Naive thymus-derived CD4-positive, alpha-beta T cell (primary cell): ENCODE measurements at regions of chrX and their contacts with region 1.

Region 1: GRCh38 chrX:153763989-153764755 is at the start of gene PLXNB3:
- DNase-seq: peak; percentile 48 to 84 (median 68)
- ATAC-seq: peak; percentile 92
- H3K4me3 ChIP-seq: no peak within 1 kb of the TSS
- H3K4me3 Mint-ChIP-seq: no peak within 1 kb of the TSS
- H3K27ac ChIP-seq: no peak within 1 kb of the TSS
- H3K27ac Mint-ChIP-seq: peak within 1 kb of the TSS in 1 of 9 donors; percentile 70
- H3K4me1 ChIP-seq: no peaks in the 10 kb centered on the region
- H3K4me1 Mint-ChIP-seq: peaks cover 0 to 10% (median 5%) of the 10 kb centered on the region in 7 donors
- H3K27me3 ChIP-seq: no peaks in the 10 kb centered on the region
- H3K27me3 Mint-ChIP-seq: peaks cover 0 to 2% (median 0%) of the 10 kb centered on the region in 5 donors
- total RNA-seq, gene PLXNB3: 0.45 to 1.6 (median 0.68) TPM in 3 of 5 experiments, not detected in the others

Region 2: DNA sequence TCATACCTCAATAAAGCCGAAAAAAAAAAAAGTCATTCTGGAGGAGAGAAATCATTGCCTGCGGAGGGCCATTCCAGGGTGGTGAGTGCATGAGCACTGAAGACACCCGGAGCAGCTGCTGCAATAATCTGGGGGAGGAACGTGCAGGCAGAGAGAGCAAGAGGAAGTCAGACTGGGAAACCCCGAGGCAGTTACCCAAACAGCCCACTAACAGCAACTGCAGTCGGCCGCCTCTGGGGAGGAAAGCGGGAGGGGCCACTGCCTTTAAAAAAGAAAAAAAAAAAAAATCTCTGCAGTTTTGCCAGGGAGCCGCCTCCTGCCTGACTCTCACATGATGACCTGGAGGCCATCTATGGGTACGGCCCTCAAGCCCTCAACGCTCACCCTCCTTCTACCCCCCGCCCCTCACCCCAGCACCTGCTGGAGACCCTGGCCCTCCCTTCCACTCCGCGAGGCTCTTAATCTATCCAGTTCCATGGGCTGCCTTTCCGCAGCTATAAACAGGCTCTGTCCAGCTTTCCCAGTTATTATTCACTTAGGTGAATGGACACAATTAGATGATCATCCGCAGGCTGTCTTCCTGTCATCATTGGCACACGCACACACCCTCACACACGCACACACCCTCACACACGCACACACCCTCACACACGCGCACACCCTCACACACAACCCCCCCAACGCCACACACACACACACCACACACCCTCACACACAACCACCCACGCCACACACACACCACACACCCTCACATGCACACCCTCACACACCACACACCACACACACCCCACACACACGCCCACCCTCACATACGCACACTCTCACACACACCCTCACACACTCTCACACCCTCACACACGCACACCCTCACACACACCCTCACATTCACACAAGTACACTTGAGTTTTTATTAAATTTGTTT is 136.9 kb after region 1 on chrX:
- CTCF ChIA-PET with region 1: no interaction called
- POLR2A ChIA-PET with region 1: no interaction called
- intact Hi-C with region 1: loop called in 1 of 2 experiments (anchors 5 kb)
- DNase-seq: peak in 8 of 9 donors; percentile 45 to 76 (median 64)
- ATAC-seq: peak; percentile 91
- H3K4me3 ChIP-seq: no peak overlapping the region
- H3K4me3 Mint-ChIP-seq: peak overlapping the region; percentile 51 to 84 (median 64)
- H3K27ac ChIP-seq: no peak overlapping the region
- H3K27ac Mint-ChIP-seq: peak overlapping the region in 8 of 9 donors; percentile 33 to 88 (median 71)
- H3K4me1 ChIP-seq: peaks cover 25 to 35% of the 10 kb centered on the region in 2 donors
- H3K4me1 Mint-ChIP-seq: peaks cover 16 to 54% (median 43%) of the 10 kb centered on the region in 7 donors
- H3K27me3 ChIP-seq: no peaks in the 10 kb centered on the region
- H3K27me3 Mint-ChIP-seq: peaks cover 0 to 5% (median 0%) of the 10 kb centered on the region in 5 donors

Region 3: DNA sequence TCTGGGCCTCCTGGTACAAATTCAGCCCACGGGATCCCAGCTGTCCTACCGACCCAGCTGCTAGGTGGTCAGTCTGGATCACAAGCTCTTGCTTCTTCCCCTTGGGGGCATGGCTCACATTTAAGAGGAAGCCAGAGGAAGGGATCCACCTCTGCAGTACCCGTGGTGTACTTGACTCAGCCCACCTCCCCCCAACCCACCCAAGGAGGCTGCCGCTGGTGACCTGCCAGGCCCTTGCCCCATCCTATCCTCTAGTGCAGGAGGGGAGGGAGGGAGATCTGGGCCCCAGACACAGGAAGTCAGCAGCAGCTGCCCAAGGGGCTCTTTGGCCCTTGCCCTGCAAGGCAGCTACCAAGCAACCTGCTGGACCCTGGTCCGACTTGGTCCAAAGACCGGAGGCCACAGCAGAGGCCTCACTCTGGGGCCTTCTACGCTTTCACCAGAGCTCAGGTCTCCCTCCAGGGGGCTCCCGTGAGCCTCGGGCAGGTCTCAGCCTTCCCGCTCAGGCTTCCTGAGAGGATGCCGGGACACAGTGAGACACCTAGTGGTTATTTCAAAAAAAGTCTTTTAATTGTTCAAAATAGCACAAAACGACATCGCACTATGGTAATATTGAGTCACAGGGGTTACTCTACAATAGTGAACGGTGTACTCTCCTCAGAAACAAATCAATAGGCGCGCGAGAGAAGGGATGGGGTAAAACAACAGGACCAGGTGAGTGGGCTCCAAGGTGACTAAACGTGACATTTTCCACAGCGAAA is 183.0 kb after region 1 on chrX:
- CTCF ChIA-PET with region 1: interaction called, 8 read pairs
- POLR2A ChIA-PET with region 1: interaction called, 5 read pairs
- intact Hi-C with region 1: loop called (anchors 1 kb)
- DNase-seq: peak; percentile 58 to 83 (median 78)
- ATAC-seq: peak; percentile 93
- H3K4me3 ChIP-seq: no peak overlapping the region
- H3K4me3 Mint-ChIP-seq: peak overlapping the region; percentile 0 to 69 (median 32)
- H3K27ac ChIP-seq: no peak overlapping the region
- H3K27ac Mint-ChIP-seq: peak overlapping the region; percentile 26 to 94 (median 87)
- H3K4me1 ChIP-seq: peaks cover 3 to 9% of the 10 kb centered on the region in 2 donors
- H3K4me1 Mint-ChIP-seq: peaks cover 6 to 30% (median 20%) of the 10 kb centered on the region in 7 donors
- H3K27me3 ChIP-seq: no peaks in the 10 kb centered on the region
- H3K27me3 Mint-ChIP-seq: no peaks in the 10 kb centered on the region

Region 4: GRCh38 chrX:153953342-153953830 is 189.2 kb after region 1 on chrX:
- CTCF ChIA-PET with region 1: interaction called, 8 read pairs
- POLR2A ChIA-PET with region 1: interaction called, 5 read pairs
- intact Hi-C with region 1: loop called (anchors 1 kb)
- DNase-seq: peak; percentile 61 to 87 (median 78)
- ATAC-seq: peak; percentile 89
- H3K4me3 ChIP-seq: no peak overlapping the region
- H3K4me3 Mint-ChIP-seq: no peak overlapping the region
- H3K27ac ChIP-seq: no peak overlapping the region
- H3K27ac Mint-ChIP-seq: peak overlapping the region in 6 of 9 donors; percentile 4 to 82 (median 52)
- H3K4me1 ChIP-seq: peaks cover 4 to 6% of the 10 kb centered on the region in 2 donors
- H3K4me1 Mint-ChIP-seq: peaks cover 0 to 22% (median 7%) of the 10 kb centered on the region in 7 donors
- H3K27me3 ChIP-seq: no peaks in the 10 kb centered on the region
- H3K27me3 Mint-ChIP-seq: no peaks in the 10 kb centered on the region

Region 5: GRCh38 chrX:154051201-154051810 is 287.1 kb after region 1 on chrX:
- CTCF ChIA-PET with region 1: no interaction called
- POLR2A ChIA-PET with region 1: no interaction called
- intact Hi-C with region 1: loop called in 1 of 2 experiments (anchors 10 kb)
- DNase-seq: peak; percentile 33 to 76 (median 66)
- ATAC-seq: peak; percentile 87
- H3K4me3 ChIP-seq: no peak overlapping the region
- H3K4me3 Mint-ChIP-seq: peak overlapping the region in 5 of 10 donors; percentile 21 to 45 (median 30)
- H3K27ac ChIP-seq: peak overlapping the region; percentile 11
- H3K27ac Mint-ChIP-seq: peak overlapping the region in 8 of 9 donors; percentile 20 to 84 (median 49)
- H3K4me1 ChIP-seq: no peaks in the 10 kb centered on the region
- H3K4me1 Mint-ChIP-seq: peaks cover 30 to 56% (median 47%) of the 10 kb centered on the region in 7 donors
- H3K27me3 ChIP-seq: no peaks in the 10 kb centered on the region
- H3K27me3 Mint-ChIP-seq: no peaks in the 10 kb centered on the region

Region 6: GRCh38 chrX:154980330-154981096 is 1216.3 kb after region 1 on chrX:
- CTCF ChIA-PET with region 1: no interaction called
- POLR2A ChIA-PET with region 1: no interaction called
- intact Hi-C with region 1: no loop called
- DNase-seq: peak; percentile 48 to 82 (median 74)
- ATAC-seq: peak; percentile 98
- H3K4me3 ChIP-seq: peak overlapping the region; percentile 65
- H3K4me3 Mint-ChIP-seq: peak overlapping the region; percentile 53 to 93 (median 82)
- H3K27ac ChIP-seq: peak overlapping the region; percentile 54
- H3K27ac Mint-ChIP-seq: peak overlapping the region; percentile 73 to 96 (median 88)
- H3K4me1 ChIP-seq: peaks cover 0 to 5% of the 10 kb centered on the region in 2 donors
- H3K4me1 Mint-ChIP-seq: peaks cover 0 to 16% (median 7%) of the 10 kb centered on the region in 7 donors
- H3K27me3 ChIP-seq: no peaks in the 10 kb centered on the region
- H3K27me3 Mint-ChIP-seq: no peaks in the 10 kb centered on the region